BJ (cell line): ENCODE measurements at regions of chr3 and their contacts with region 1.

Region 1: DNA sequence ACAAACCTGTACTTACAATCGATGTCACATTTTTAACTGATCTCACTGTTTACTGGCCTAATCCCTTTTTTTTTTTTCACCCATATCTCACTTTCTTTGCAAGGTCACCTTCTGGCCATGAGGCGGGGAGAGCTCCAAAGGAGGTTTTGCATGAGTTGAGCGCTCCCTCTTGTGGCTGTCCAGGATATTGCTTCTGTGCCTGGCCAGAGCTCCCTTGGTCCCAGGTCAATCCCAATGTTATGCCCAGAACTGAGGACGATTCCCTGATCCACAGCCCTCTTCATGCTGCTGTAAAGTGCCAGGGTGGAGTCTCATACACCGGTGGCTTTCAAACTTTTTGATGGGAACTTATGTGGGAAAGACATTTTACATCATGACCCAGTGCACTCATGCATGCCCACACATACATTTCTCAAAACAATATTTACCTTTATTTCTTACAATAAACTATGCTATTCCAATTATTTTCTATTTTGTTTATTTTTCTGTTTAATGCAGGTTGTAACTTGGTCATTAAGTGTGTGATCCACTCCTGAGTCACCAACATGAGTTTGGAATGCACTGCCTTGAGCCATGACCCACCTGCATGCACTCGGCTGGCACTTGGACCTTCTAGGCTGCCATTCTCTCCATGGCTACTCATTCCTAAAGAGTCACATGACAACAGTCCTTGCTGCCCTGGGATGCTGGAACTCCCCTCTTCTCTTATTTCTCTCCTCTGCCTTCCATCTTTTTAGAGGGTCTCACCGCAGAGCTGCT is 9.6 kb upstream of the SST start:
- DNase-seq: no peak
- H3K4me3 ChIP-seq: no peak overlapping the region
- H3K27me3 ChIP-seq: no peaks in the 10 kb centered on the region; the same call in 1 of the 2 replicates
- CTCF ChIP-seq: peak; percentile 93

Region 2: DNA sequence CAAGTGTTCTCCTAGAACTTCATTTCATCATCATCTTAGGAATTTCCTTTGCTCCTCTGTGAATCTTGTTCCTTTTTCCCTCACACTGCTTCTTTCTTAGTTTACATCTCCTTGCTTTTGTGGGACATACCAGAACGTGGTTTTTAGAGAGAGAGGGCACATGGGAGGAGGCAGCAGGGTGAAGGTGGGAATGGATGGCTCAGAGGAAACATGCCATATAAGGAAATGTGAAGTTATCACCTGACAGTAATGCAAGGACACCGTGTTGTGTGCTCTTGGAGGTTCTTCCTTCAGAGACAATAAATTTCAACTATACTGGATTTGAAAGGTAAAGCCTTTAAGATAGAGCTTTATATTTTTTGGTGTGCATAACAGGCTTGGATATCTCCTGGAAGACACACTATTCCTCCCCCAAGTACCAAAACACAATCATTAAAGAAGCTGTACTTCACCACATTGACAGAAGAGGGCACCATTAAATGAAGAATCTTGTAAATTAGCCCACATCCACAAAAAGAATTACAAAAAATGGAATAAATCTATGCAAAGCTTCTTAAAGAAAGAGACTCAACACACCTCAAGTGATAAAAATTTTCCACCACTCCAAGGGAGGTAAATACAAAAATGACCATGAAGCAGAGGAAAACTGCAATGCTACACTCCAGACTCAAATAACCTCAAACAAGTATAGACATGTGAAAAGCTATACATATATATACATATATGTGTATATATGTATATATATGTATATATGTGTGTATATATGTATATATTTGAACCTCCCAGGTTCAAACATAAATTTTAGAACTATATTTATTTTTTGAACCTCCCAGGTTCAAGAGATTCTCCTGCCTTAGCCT is 566.7 kb before region 1 on chr3:
- CTCF ChIA-PET with region 1: interaction called, 20 read pairs
- POLR2A ChIA-PET with region 1: no interaction called
- DNase-seq: no peak
- H3K4me3 ChIP-seq: no peak overlapping the region
- H3K27me3 ChIP-seq: no peaks in the 10 kb centered on the region
- CTCF ChIP-seq: peak; percentile 56

Region 3: GRCh38 chr3:187210545-187211327 is 469.1 kb before region 1 on chr3:
- CTCF ChIA-PET with region 1: interaction called, 19 read pairs
- POLR2A ChIA-PET with region 1: no interaction called
- DNase-seq: peak; percentile 80
- H3K4me3 ChIP-seq: no peak overlapping the region
- H3K27me3 ChIP-seq: no peaks in the 10 kb centered on the region
- CTCF ChIP-seq: no peak

Region 4: DNA sequence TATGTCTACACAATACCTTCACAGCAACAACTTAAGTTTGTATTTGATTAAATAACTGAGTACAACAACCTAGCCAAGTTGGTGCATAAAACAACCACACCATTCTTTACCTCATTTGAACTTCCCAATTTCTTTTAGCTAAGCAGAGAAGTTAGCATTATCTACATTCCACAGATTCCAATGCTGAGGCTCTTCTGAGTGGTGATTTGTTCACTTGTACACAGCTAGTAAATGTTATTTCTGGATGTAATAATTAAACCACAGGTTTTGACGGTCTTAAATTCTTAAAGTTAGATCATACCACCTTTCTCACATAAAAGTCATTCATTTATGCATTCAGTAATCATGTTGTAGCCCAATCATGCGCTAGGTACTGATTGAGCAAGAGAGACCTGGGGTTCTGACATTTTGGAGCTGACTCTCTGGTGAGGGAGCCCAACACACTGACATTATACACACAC is 112.1 kb before region 1 on chr3:
- CTCF ChIA-PET with region 1: interaction called, 25 read pairs
- POLR2A ChIA-PET with region 1: no interaction called
- DNase-seq: peak; percentile 90
- H3K4me3 ChIP-seq: no peak overlapping the region
- H3K27me3 ChIP-seq: no peaks in the 10 kb centered on the region
- CTCF ChIP-seq: no peak

Region 5: GRCh38 chr3:187616307-187616972 is 63.4 kb before region 1 on chr3:
- CTCF ChIA-PET with region 1: interaction called, 65 read pairs
- POLR2A ChIA-PET with region 1: no interaction called
- DNase-seq: no peak
- H3K4me3 ChIP-seq: no peak overlapping the region
- H3K27me3 ChIP-seq: no peaks in the 10 kb centered on the region
- CTCF ChIP-seq: peak; percentile 81

Region 6: GRCh38 chr3:187705164-187705563 is 25.3 kb after region 1 on chr3:
- CTCF ChIA-PET with region 1: interaction called, 118 read pairs
- POLR2A ChIA-PET with region 1: no interaction called
- DNase-seq: no peak
- H3K4me3 ChIP-seq: no peak overlapping the region
- H3K27me3 ChIP-seq: peaks cover 1% of the 10 kb centered on the region
- CTCF ChIP-seq: no peak

Region 7: DNA sequence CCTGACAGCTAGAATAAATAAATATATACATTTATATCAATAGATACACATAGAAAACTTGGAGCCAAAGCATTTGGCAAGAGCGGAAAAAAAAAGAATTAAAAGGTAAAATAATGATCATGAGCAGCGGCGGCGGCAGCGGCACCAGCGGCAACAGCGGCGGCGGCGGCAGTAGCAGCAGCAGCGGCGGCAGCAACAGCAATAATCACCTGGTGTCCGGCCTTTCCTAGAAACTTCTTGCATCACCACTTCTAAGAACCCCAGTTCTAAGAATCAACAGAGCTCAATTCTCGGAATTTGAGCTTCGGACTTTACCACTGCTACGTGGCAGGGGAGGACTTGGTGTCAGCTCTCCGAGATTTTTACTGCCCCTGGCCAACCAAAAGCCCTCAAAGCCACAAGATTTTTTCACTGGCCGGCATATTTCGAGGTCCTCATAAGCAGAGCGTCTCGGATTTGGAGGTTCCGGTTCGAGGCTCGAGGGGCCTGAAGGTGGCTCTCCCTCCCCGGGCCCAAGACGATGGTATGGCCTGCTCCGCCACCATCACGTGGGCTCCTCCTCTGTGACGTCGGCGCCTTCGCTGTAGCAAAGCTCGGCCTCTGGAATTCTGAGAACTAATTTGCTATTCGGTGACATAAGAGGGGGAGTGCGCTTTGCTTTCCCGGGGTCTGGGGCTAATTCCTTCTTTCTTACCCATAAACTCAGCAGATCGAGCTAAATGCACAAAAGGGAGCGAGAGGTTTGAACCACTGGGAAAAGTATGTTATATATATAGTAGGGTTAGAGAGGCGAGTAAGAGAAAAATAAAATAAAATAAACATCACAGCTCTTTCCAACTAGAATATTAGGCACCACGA is 65.6 kb after region 1 on chr3 and contains the start of gene BCL6:
- CTCF ChIA-PET with region 1: no interaction called
- POLR2A ChIA-PET with region 1: no interaction called
- DNase-seq: peak; percentile 84
- H3K4me3 ChIP-seq: peak within 1 kb of the TSS; percentile 96
- H3K27me3 ChIP-seq: no peaks in the 10 kb centered on the region
- CTCF ChIP-seq: no peak
- polyA plus RNA-seq, gene BCL6: 14.1 and 17.4 TPM in 2 replicates